OCI-LY7 (cell line): ENCODE measurements at regions of chr3 and their contacts with region 1.

Region 1: DNA sequence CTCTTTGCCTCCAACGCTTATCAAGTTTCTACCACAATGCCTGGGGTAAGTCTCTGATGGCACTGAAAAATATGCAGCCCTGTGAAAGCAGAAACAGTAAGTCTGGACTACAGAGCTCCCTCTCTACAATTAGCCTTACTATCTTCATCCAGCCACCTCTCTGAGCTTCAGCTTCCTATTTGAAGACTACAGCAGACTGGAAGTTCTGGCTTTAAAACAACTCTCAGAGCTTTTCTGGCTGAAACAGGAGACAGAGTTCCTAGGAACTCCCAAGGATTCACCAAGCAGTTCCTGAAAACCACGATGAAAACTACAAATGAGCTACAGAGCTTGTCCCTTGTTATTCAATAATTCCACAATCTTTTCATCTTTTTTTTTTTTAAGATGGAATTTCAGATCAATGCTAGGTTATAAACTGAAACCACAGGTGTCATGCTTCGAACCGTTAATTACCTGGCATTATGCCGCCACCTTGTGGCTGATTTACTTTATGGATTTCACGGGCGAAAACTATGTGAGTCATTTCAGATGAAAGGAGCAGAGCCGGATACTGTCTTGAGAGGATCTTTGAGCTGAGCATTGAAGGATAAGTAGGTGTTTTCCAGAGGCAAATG is 3.9 kb downstream of the CRYGS start:
- DNase-seq: peak; percentile 83
- H3K4me3 ChIP-seq: no peak overlapping the region
- H3K27ac ChIP-seq: no peak overlapping the region
- H3K4me1 ChIP-seq: peaks cover 16% of the 10 kb centered on the region
- CTCF ChIP-seq: peak; percentile 99

Region 2: DNA sequence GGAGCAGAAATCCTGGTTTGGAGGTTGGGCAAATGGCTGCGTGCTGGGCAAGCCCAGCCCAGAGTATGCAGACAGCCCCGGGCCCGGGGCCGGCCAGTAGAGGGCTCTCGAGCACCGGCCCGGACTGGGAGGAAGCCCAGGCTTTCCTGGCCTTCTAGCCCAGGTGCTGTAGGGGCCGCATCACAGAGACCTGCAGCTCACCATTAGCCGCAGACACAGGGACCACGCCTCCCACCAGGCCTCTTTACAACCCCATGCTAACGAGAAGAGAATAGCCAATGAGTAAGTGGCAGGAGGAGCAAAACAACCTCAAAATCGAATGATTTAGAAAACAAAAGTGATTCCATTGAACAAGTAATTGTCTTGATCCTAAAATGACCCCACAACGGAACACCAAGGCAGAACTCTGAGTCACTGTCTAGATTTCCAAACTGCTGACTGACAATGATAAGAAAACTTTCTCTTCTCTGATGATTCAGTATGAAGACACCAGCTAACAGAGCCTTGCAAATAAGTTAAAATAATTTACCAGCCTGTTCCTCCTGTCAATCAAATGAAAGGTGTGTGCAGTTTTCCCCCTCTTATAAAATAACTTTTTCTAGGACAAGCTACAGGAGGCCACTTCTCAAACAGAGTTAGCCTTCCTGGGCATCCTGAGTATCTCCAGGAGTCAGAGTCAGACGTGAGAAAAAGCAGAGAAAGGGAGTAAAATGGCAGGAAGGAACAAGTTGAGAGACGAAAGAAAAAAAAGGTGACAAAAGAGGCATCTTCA is 280.5 kb before region 1 on chr3:
- CTCF ChIA-PET with region 1: interaction called, 25 read pairs
- POLR2A ChIA-PET with region 1: interaction called, 6 read pairs
- intact Hi-C with region 1: loop called (anchors 1 kb)
- DNase-seq: peak; percentile 84
- H3K4me3 ChIP-seq: no peak overlapping the region
- H3K27ac ChIP-seq: no peak overlapping the region
- H3K4me1 ChIP-seq: peaks cover 26% of the 10 kb centered on the region
- CTCF ChIP-seq: peak; percentile 97

Region 3: GRCh38 chr3:186464424-186465093 is 75.8 kb before region 1 on chr3:
- CTCF ChIA-PET with region 1: interaction called, 3 read pairs
- POLR2A ChIA-PET with region 1: no interaction called
- intact Hi-C with region 1: loop called (anchors 2 kb)
- DNase-seq: peak; percentile 41
- H3K4me3 ChIP-seq: no peak overlapping the region
- H3K27ac ChIP-seq: no peak overlapping the region
- H3K4me1 ChIP-seq: no peaks in the 10 kb centered on the region
- CTCF ChIP-seq: peak; percentile 67

Region 4: DNA sequence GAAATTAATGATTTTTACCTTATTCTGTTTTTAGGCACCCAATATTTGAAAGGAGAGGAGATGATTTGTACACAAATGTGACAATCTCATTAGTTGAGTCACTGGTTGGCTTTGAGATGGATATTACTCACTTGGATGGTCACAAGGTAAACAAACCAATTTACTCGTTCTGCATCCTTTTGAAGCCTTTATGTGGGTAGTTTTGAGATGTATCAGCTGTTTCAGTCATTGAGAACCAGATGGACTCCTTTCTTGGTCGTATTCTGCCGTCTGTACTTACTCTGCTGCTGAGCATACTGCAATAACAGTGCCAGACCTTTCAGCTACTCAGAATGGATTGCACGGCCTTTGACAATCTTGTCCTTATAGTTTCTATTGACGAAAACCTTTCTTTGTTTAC is 43.5 kb after region 1 on chr3:
- CTCF ChIA-PET with region 1: no interaction called
- POLR2A ChIA-PET with region 1: no interaction called
- intact Hi-C with region 1: no loop called
- DNase-seq: no peak
- H3K4me3 ChIP-seq: no peak overlapping the region
- H3K27ac ChIP-seq: no peak overlapping the region
- H3K4me1 ChIP-seq: no peaks in the 10 kb centered on the region
- CTCF ChIP-seq: no peak